RWPE1 (cell line): ENCODE measurements at regions of chr1 and their contacts with region 1.

Region 1: DNA sequence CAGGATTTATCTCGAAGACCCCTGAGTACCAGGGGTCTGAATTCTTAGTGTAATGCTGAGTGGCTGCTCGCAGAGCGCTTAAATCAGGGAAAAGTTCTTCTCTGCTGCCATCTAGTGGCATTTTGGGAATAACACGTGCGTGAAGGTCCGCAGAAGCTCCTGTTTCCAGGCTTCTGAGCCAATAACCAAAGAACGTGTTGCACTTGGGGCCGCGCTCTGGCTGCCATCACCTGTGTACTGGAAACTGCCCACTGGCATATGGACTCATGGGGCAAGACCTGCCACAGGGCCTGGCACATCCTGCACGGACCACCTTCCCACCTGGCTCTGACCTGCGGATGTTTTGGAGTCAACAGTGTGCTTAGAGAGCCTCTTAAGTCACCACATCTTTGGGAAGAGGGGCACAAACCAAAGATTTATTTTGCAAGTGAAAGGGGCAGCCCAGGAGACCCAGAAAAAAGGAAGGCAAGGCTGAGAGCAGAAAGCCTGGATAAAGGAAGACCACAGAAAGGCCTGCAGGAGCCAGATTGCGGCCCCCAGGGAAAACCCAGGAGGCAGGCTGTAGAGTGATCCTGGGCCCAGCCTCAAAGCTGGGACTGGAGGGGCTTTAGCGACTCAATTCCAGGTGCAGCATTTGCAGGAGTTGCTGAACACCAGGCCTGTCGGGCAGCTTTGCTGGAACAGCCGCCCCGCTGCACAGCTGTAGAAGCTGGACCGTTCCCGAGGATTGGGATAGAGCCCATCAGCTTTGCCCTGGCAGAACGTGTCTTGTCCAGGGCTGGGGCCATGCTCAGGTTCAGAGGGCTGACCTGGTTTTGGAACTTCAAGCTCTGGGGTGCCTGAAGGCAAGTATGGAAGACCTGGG is 13.0 kb downstream of the CHIT1 start:
- DNase-seq: peak; percentile 77
- H3K27ac ChIP-seq: no peak overlapping the region
- CTCF ChIP-seq: peak; percentile 72

Region 2: GRCh38 chr1:203046984-203047630 is 169.4 kb before region 1 on chr1:
- CTCF ChIA-PET with region 1: interaction called, 197 read pairs
- POLR2A ChIA-PET with region 1: no interaction called
- DNase-seq: peak; percentile 92
- H3K27ac ChIP-seq: peak overlapping the region; percentile 57; the same call in 1 of the 2 replicates
- CTCF ChIP-seq: no peak

Region 3: GRCh38 chr1:203117611-203118575 is 98.6 kb before region 1 on chr1:
- CTCF ChIA-PET with region 1: interaction called, 49 read pairs
- POLR2A ChIA-PET with region 1: no interaction called
- DNase-seq: peak; percentile 83
- H3K27ac ChIP-seq: no peak overlapping the region
- CTCF ChIP-seq: peak; percentile 60

Region 4: DNA sequence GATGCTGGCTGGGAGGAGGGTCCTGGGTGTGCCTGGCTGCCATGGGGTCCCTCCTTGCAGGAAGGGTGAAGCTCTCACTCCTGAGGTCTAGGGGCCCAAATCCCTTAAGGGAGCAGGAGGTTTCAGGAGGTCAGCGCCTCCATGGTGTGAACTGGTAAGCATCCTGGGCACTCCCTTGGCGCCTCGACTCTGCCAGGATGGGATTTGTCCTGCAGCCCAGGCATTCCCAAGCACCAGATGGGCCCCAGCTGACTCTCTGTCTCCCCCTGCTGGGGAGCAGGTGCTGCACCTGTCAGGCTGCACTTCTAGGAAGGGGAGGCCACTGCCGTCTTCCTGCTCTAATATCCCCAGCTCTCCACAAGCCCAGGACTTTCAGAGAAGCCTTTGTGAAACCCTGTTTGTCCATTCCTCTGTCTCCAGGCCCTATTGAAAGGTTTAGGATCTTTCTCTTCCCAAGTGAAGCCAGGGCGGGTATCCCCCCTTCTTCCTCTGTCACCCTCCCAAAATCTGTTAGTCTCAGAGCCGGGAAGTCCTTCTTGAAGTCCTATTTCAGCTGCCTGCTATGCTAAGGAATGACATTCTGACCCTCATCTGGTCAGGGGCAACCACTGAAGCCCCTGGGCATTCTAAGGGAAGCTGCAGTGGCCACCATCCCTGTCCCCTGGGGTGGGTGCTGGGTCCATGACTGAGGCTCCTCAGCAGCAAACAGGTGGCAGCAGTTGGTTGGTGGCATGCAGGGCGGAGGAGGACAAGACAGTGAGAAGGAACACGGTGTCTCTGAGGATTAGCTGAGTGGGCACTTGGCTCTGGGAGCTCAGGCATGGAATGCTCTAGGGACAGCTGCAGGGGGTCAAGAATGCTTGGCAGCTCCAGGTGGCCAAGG is 44.1 kb before region 1 on chr1:
- CTCF ChIA-PET with region 1: interaction called, 45 read pairs
- POLR2A ChIA-PET with region 1: no interaction called
- DNase-seq: peak; percentile 82
- H3K27ac ChIP-seq: no peak overlapping the region
- CTCF ChIP-seq: peak; percentile 67

Region 5: GRCh38 chr1:203199816-203200571 is 16.5 kb before region 1 on chr1:
- CTCF ChIA-PET with region 1: interaction called, 19 read pairs
- POLR2A ChIA-PET with region 1: no interaction called
- DNase-seq: peak; percentile 49
- H3K27ac ChIP-seq: peak overlapping the region; percentile 92
- CTCF ChIP-seq: no peak

Region 6: DNA sequence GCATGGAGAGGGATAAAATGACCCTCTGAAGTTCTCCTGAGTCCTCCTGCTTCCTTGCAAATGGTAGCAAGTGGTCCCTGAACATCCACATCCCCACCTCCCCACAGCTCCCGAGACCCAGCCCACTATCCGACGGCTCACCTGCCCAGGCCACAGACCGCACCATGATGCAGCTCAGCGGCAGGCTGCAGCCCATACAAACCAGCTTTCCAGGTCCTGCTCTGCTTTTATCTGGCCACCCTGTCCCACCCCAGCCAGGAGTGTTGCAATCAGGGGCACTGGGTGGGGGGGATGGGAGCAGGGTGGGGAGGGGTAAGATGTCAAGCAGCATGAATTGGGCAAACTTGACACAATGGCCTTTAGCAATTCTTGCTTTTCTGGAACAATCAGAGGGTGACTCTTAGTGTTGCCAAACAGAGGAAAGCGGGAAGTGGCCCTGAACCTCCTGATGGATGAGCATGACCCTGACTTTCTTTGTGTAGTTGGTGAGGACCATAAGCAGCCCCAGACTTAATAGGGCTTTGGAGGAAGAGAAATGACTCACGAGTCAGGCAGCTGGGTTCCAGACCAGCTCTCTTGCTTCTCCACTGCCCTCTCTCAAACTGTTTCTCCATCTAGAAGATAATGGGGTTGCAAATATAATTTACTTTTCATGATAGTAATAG is 13.1 kb after region 1 on chr1 and contains the start of gene CHIT1:
- CTCF ChIA-PET with region 1: interaction called, 17 read pairs
- POLR2A ChIA-PET with region 1: no interaction called
- DNase-seq: no peak
- H3K27ac ChIP-seq: no peak within 1 kb of the TSS
- CTCF ChIP-seq: no peak

Region 7: GRCh38 chr1:203252678-203253077 is 36.2 kb after region 1 on chr1:
- CTCF ChIA-PET with region 1: no interaction called
- POLR2A ChIA-PET with region 1: no interaction called
- DNase-seq: no peak
- H3K27ac ChIP-seq: no peak overlapping the region
- CTCF ChIP-seq: no peak